CD4-positive, alpha-beta T cell (primary cell): ENCODE measurements at regions of chr6 and their contacts with region 1.

Region 1: GRCh38 chr6:132813173-132813856 is 1.1 kb upstream of the RPS12 start:
- DNase-seq: peak in 13 of 14 experiments; percentile 4 to 81 (median 22)
- ATAC-seq: peak; percentile 22
- H3K4me3 ChIP-seq: peak overlapping the region; percentile 82
- H3K4me3 Mint-ChIP-seq: peak overlapping the region; percentile 97
- H3K27ac ChIP-seq: peak overlapping the region; percentile 70 to 80
- H3K27ac Mint-ChIP-seq: peak overlapping the region; percentile 97
- H3K4me1 ChIP-seq: peaks cover 32% of the 10 kb centered on the region
- H3K4me1 Mint-ChIP-seq: peaks cover 55% of the 10 kb centered on the region
- H3K27me3 ChIP-seq: no peaks in the 10 kb centered on the region
- H3K27me3 Mint-ChIP-seq: no peaks in the 10 kb centered on the region
- CTCF ChIP-seq: no peak

Region 2: GRCh38 chr6:132512638-132513632 is 300.4 kb before region 1 on chr6 and contains the start of gene STX7:
- CTCF ChIA-PET with region 1: no interaction called
- POLR2A ChIA-PET with region 1: interaction called, 39 read pairs
- intact Hi-C with region 1: loop called in 1 of 2 experiments (anchors 5 kb)
- DNase-seq: peak; percentile 70 to 92 (median 82)
- ATAC-seq: peak; percentile 93
- H3K4me3 ChIP-seq: peak within 1 kb of the TSS; percentile 76
- H3K4me3 Mint-ChIP-seq: peak within 1 kb of the TSS; percentile 99
- H3K27ac ChIP-seq: peak within 1 kb of the TSS in 1 of 2 donors; percentile 39
- H3K27ac Mint-ChIP-seq: peak within 1 kb of the TSS; percentile 86
- H3K4me1 ChIP-seq: peaks cover 3% of the 10 kb centered on the region
- H3K4me1 Mint-ChIP-seq: peaks cover 42% of the 10 kb centered on the region
- H3K27me3 ChIP-seq: no peaks in the 10 kb centered on the region
- H3K27me3 Mint-ChIP-seq: peaks cover 2% of the 10 kb centered on the region
- CTCF ChIP-seq: no peak
- total RNA-seq, gene STX7: 4.3 to 5.9 TPM

Region 3: GRCh38 chr6:132768051-132768517 is 45.2 kb before region 1 on chr6:
- CTCF ChIA-PET with region 1: no interaction called
- POLR2A ChIA-PET with region 1: interaction called, 82 read pairs
- intact Hi-C with region 1: loop called in 1 of 2 experiments (anchors 5 kb)
- DNase-seq: peak in 3 of 14 experiments; percentile 16 to 47 (median 45)
- ATAC-seq: peak; percentile 38
- H3K4me3 ChIP-seq: no peak overlapping the region
- H3K4me3 Mint-ChIP-seq: no peak overlapping the region
- H3K27ac ChIP-seq: no peak overlapping the region
- H3K27ac Mint-ChIP-seq: no peak overlapping the region
- H3K4me1 ChIP-seq: peaks cover 8% of the 10 kb centered on the region
- H3K4me1 Mint-ChIP-seq: peaks cover 15% of the 10 kb centered on the region
- H3K27me3 ChIP-seq: no peaks in the 10 kb centered on the region
- H3K27me3 Mint-ChIP-seq: no peaks in the 10 kb centered on the region
- CTCF ChIP-seq: peak; percentile 27

Region 4: GRCh38 chr6:132792510-132792909 is 20.8 kb before region 1 on chr6:
- CTCF ChIA-PET with region 1: interaction called, 43 read pairs
- POLR2A ChIA-PET with region 1: interaction called, 168 read pairs
- intact Hi-C with region 1: no loop called
- DNase-seq: no peak
- ATAC-seq: no peak
- H3K4me3 ChIP-seq: no peak overlapping the region
- H3K4me3 Mint-ChIP-seq: no peak overlapping the region
- H3K27ac ChIP-seq: no peak overlapping the region
- H3K27ac Mint-ChIP-seq: no peak overlapping the region
- H3K4me1 ChIP-seq: peaks cover 6% of the 10 kb centered on the region
- H3K4me1 Mint-ChIP-seq: peaks cover 48% of the 10 kb centered on the region
- H3K27me3 ChIP-seq: no peaks in the 10 kb centered on the region
- H3K27me3 Mint-ChIP-seq: no peaks in the 10 kb centered on the region
- CTCF ChIP-seq: no peak

Region 5: GRCh38 chr6:132798869-132799538 is 14.3 kb before region 1 on chr6:
- CTCF ChIA-PET with region 1: interaction called, 43 read pairs
- POLR2A ChIA-PET with region 1: interaction called, 168 read pairs
- intact Hi-C with region 1: loop called (anchors 1 to 2 kb)
- DNase-seq: peak; percentile 48 to 87 (median 66)
- ATAC-seq: peak; percentile 81
- H3K4me3 ChIP-seq: peak overlapping the region; percentile 85
- H3K4me3 Mint-ChIP-seq: no peak overlapping the region
- H3K27ac ChIP-seq: peak overlapping the region in 1 of 2 donors; percentile 53
- H3K27ac Mint-ChIP-seq: no peak overlapping the region
- H3K4me1 ChIP-seq: peaks cover 6% of the 10 kb centered on the region
- H3K4me1 Mint-ChIP-seq: peaks cover 44% of the 10 kb centered on the region
- H3K27me3 ChIP-seq: no peaks in the 10 kb centered on the region
- H3K27me3 Mint-ChIP-seq: no peaks in the 10 kb centered on the region
- CTCF ChIP-seq: peak; percentile 89

Region 6: GRCh38 chr6:132907914-132908313 is 94.6 kb after region 1 on chr6:
- CTCF ChIA-PET with region 1: no interaction called
- POLR2A ChIA-PET with region 1: no interaction called
- intact Hi-C with region 1: no loop called
- DNase-seq: no peak
- ATAC-seq: no peak
- H3K4me3 ChIP-seq: no peak overlapping the region
- H3K4me3 Mint-ChIP-seq: no peak overlapping the region
- H3K27ac ChIP-seq: no peak overlapping the region
- H3K27ac Mint-ChIP-seq: no peak overlapping the region
- H3K4me1 ChIP-seq: no peaks in the 10 kb centered on the region
- H3K4me1 Mint-ChIP-seq: no peaks in the 10 kb centered on the region
- H3K27me3 ChIP-seq: no peaks in the 10 kb centered on the region
- H3K27me3 Mint-ChIP-seq: no peaks in the 10 kb centered on the region
- CTCF ChIP-seq: no peak

Region 7: DNA sequence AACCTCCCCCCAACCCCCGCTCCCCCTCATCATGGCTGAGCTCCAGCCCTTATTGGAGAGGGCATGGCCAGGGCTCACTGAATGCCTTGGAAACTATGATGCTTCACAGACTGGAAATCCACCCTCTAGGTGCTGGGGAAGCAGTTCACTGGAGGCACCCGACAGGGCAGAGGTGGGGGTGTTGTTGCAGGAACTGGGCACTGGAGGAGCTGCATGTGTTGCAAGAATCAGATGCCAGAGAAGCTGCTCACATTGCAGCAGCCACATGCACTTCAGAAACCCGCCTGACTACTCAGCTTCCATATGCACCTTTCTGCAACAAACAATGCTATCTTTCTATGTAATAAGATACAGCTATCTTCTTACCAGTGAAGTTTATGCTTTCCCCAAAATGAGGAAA is 1131.8 kb after region 1 on chr6:
- CTCF ChIA-PET with region 1: no interaction called
- POLR2A ChIA-PET with region 1: interaction called, 3 read pairs
- intact Hi-C with region 1: loop called (anchors 5 to 10 kb)
- DNase-seq: no peak
- ATAC-seq: no peak
- H3K4me3 ChIP-seq: no peak overlapping the region
- H3K4me3 Mint-ChIP-seq: no peak overlapping the region
- H3K27ac ChIP-seq: no peak overlapping the region
- H3K27ac Mint-ChIP-seq: no peak overlapping the region
- H3K4me1 ChIP-seq: no peaks in the 10 kb centered on the region
- H3K4me1 Mint-ChIP-seq: no peaks in the 10 kb centered on the region
- H3K27me3 ChIP-seq: peaks cover 0 to 4% of the 10 kb centered on the region in 2 experiments
- H3K27me3 Mint-ChIP-seq: no peaks in the 10 kb centered on the region
- CTCF ChIP-seq: no peak

Region 8: DNA sequence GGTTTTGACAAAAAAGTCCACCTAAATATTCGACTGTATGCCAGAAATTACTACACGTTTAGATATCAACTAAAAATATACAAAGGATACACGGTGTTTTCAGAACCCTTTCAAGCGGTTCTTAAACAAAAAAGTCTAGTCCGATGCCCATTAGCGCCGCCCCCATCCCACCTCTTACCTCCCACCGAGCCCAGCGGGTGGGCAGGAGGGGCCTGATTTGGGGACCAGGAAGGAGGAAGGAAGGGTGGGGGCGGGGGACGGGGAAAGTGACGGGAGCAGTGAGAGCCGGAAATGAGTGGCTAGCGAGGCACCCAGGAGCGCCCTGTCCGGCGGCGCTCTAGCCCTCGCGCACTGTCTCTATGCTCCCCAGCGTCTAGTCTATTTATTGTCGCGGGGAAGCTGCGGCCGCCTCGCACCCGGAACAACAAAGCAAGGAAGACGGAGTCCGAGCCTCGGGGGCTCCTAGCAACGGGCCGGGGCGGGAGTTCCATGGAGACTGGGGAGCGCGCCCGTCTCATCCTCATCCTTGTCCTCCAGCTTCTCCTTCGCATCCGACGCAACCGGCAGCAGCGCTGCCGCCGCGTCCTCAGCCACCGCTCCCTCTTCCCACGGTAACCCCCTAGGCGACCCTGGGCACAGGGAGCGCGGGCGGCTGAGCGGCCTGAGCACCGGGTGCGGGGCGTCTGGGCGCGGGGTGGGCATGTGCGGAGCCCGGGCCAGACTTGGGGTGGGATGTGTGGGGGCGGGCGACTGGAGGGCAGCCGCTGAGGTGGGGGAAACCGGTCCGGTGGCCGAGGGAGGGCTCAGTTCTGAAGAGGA is 1139.7 kb after region 1 on chr6 and contains the start of gene TBPL1:
- CTCF ChIA-PET with region 1: no interaction called
- POLR2A ChIA-PET with region 1: interaction called, 3 read pairs
- intact Hi-C with region 1: loop called (anchors 5 to 10 kb)
- DNase-seq: peak; percentile 77 to 96 (median 88)
- ATAC-seq: peak; percentile 83
- H3K4me3 ChIP-seq: peak within 1 kb of the TSS; percentile 83
- H3K4me3 Mint-ChIP-seq: peak within 1 kb of the TSS; percentile 97
- H3K27ac ChIP-seq: peak within 1 kb of the TSS; percentile 68 to 71
- H3K27ac Mint-ChIP-seq: peak within 1 kb of the TSS; percentile 91
- H3K4me1 ChIP-seq: peaks cover 14% of the 10 kb centered on the region
- H3K4me1 Mint-ChIP-seq: peaks cover 48% of the 10 kb centered on the region
- H3K27me3 ChIP-seq: no peaks in the 10 kb centered on the region
- H3K27me3 Mint-ChIP-seq: no peaks in the 10 kb centered on the region
- CTCF ChIP-seq: no peak
- total RNA-seq, gene TBPL1: 34.7 to 37.3 TPM